ENCODE measurements at regions of chr15 and their contacts with region 1.

Region 1: GRCh38 chr15:40857601-40858341 is 13.9 kb downstream of the SPINT1 start:
- DNase-seq: peak; percentile 88
- H3K4me3 Mint-ChIP-seq: no peak overlapping the region
- H3K27ac Mint-ChIP-seq: no peak overlapping the region
- H3K4me1 Mint-ChIP-seq: peaks cover 5% of the 10 kb centered on the region
- H3K27me3 Mint-ChIP-seq: no peaks in the 10 kb centered on the region

Region 2: DNA sequence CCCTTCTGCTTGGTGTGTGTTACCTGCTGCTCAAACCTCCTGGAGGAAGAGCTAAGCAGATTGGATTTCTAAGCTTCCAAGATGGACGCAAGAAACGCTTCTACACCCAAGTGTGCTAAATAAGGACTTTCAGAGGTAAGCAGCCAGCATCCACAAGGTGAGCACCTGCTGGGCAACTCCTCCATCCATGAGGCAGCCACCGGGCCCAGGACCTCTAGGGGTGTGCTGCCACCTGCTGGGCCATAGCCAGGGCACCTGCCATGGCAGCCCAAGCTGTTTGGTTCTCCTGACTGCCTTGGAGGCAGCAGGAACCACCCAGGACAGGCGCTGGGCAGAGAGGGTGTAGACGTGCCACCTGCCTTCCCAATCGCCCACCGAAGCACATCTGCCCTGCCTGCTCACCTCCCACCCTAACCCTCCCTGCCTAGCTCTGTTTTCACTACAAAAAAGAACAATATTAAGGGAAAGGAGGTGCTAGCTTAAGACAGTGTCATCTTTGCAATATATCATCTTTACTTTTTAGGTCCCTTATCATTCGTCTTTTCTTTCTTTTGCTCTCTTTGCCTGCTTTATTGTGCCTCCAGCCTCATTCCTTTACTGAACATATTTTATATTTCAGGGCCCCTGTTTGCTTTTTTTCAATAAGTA is 75.1 kb before region 1 on chr15:
- CTCF ChIA-PET with region 1: interaction called, 17 read pairs
- POLR2A ChIA-PET with region 1: no interaction called
- intact Hi-C with region 1: no loop called
- DNase-seq: peak; percentile 87
- H3K4me3 Mint-ChIP-seq: no peak overlapping the region
- H3K27ac Mint-ChIP-seq: no peak overlapping the region
- H3K4me1 Mint-ChIP-seq: peaks cover 22% of the 10 kb centered on the region
- H3K27me3 Mint-ChIP-seq: no peaks in the 10 kb centered on the region

Region 3: DNA sequence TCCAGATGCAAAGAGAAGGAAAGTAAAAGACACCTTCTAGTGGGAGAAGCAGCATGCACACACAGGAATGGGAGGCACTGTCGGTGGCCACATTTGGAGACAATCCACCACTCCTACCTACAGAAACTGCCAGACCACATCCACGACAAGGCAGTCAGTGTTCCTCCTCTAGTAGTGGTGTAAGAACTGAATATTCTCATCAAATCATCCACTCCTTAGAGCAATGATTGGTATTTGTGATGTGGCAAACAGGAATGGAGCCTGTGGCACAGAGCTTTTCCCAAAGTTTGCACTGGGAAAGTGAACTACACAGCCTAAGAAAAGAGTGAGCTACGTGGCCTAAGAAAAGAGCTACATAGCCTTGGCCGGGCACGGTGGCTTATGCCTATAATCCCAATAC is 19.0 kb before region 1 on chr15:
- CTCF ChIA-PET with region 1: interaction called, 109 read pairs
- POLR2A ChIA-PET with region 1: interaction called, 4 read pairs
- intact Hi-C with region 1: no loop called
- DNase-seq: no peak
- H3K4me3 Mint-ChIP-seq: no peak overlapping the region
- H3K27ac Mint-ChIP-seq: no peak overlapping the region
- H3K4me1 Mint-ChIP-seq: peaks cover 4% of the 10 kb centered on the region
- H3K27me3 Mint-ChIP-seq: peaks cover 3% of the 10 kb centered on the region

Region 4: DNA sequence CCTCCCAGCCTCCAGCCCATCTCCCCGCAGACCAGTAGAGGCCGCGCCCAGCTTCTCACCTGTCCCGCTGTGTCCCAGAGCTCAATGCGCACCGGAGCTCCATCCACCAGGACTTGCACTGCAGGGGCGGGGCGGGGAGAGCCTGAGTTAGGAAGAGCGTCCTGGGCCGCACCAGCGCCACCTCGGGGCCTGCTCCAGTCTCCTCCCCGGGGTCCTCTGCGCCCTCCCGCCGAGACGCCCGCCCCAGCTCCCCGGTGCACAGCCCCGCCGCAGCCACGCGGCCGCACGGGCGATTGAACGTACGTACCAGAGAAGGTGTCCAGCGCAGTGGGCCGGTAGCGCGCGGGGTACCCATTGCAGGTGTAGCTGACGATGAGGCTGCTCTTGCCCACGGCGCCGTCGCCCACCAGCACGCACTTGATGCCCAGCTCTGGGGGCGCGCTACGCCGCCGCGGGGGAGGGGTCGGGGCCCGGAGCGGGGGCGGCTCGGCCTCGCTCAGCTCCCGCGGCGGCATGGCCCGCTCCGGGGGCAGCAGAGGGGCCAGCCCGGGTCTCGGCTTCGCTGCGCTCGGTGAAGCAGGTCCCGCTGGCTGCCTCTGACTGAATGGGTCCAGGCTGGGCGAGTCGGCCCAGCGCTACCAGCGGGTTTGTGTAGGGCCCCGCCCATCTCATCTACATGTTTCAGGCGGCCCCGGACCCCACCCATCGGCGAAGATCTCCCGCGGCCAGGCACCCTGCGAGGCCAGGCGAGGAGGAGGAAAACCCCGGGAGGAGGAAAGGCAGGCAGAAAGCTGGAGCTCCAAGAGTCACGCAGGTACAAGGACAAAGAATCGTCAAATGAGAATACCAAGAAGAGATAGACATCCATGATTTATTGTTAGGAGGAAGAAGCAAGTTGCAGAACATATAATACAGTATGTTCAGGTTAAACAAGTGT is 16.1 kb after region 1 on chr15 and contains the start of gene RHOV:
- CTCF ChIA-PET with region 1: interaction called, 28 read pairs
- POLR2A ChIA-PET with region 1: interaction called, 3 read pairs
- intact Hi-C with region 1: loop called (anchors 1 kb)
- DNase-seq: peak; percentile 67
- H3K4me3 Mint-ChIP-seq: peak within 1 kb of the TSS; percentile 69
- H3K27ac Mint-ChIP-seq: no peak within 1 kb of the TSS
- H3K4me1 Mint-ChIP-seq: peaks cover 22% of the 10 kb centered on the region
- H3K27me3 Mint-ChIP-seq: peaks cover 5% of the 10 kb centered on the region
- total RNA-seq, gene RHOV: 0.29 to 0.53 TPM

Region 5: DNA sequence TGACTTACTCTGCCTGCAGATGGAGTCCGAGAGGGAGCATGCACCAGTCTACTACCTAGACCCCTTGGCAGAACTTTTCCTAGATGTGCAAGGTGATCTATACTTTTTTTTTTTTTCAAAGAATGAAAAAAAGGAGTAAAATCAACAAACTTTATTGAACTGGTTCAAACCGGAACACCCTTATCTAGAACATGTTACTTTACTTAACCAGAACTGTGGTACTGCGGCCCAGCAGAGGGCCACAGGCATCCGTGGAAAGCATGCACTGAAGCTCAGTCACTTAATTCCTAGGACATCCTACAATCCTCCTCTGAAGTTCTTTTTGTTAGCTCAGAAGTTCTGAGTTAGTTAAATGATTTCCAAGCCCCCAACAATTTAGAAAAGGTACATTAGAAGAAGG is 117.1 kb after region 1 on chr15:
- CTCF ChIA-PET with region 1: no interaction called
- POLR2A ChIA-PET with region 1: no interaction called
- intact Hi-C with region 1: no loop called
- DNase-seq: no peak
- H3K4me3 Mint-ChIP-seq: no peak overlapping the region
- H3K27ac Mint-ChIP-seq: no peak overlapping the region
- H3K4me1 Mint-ChIP-seq: no peaks in the 10 kb centered on the region
- H3K27me3 Mint-ChIP-seq: no peaks in the 10 kb centered on the region

Measured in activated CD4-positive, alpha-beta memory T cell treated with anti-CD3 and anti-CD28 coated beads for 36 hours (primary cell).